Uterus (tissue), 4 donors: ENCODE measurements at regions of chr3 and their contacts with region 1.

Region 1: DNA sequence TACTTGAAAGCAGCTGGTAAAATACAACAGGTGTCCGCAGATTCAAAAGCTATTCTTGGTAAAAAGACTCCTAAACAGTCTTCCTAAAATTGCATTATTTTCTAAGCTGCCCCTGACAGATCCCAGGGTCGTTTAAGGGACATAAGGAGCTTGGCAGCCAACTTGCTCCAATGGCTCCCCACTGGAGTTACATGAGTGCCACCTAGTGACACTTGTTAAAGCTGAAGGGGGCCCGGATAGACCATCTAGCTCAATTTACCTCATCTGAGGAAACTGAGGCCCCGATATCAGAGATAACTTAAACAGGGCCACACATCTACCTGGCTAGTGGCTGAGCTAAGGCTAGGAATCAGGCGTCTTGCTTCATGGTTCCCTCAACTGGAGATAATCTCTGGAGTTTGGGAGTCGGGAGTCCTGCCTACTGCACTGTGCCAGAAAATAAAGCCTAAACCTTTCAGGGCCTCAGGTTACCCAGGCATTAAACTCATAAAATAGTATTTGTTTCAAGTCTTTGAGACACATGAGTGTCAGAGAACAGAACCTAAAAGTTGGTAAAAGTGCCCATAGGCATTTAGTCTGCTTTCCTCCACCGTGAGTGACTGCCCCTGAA is 6.5 kb upstream of the TBC1D23 start:
- DNase-seq: peak; percentile 47 to 64
- H3K4me3 ChIP-seq: no peak overlapping the region
- H3K27ac ChIP-seq: peak overlapping the region in 1 of 2 donors; percentile 26
- H3K4me1 ChIP-seq: no peaks in the 10 kb centered on the region
- H3K27me3 ChIP-seq: no peaks in the 10 kb centered on the region
- CTCF ChIP-seq: peak; percentile 79 to 89 (median 83)
- POLR2A ChIP-seq: no peak

Region 2: DNA sequence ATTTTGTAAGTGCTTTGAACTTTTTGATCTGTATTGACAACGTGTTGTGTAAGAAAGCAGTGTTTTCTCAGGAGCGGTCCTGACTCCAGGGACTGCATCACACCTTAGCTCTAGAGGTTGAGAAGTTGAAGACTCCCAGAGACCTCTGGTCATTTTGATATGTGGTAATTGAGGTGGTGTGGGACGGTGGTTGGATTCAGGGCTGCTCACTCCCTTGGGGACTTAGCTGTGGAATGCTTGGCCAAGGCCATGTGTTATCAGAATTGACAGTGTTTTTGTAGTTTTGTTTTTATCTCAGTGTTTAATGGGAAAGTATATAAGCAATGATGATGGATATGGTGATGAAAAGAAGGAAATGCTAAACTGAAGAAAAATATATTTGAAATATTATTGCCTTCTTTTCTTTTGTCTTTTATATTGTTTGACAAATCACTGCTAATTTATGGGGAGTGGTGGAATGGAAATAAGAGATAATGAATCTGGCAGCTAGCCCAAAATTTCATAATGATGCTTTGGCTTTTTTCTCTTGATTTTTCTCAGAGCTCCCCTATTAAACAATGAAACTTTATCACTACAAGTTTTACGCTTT is 420.6 kb before region 1 on chr3:
- intact Hi-C with region 1: loop called (anchors 10 kb)
- DNase-seq: no peak
- H3K4me3 ChIP-seq: no peak overlapping the region
- H3K27ac ChIP-seq: peak overlapping the region; percentile 18 to 31
- H3K4me1 ChIP-seq: no peaks in the 10 kb centered on the region
- H3K27me3 ChIP-seq: no peaks in the 10 kb centered on the region
- CTCF ChIP-seq: no peak
- POLR2A ChIP-seq: no peak

Region 3: GRCh38 chr3:100068826-100069225 is 185.4 kb before region 1 on chr3:
- intact Hi-C with region 1: loop called (anchors 10 kb)
- DNase-seq: peak; percentile 72 to 77
- H3K4me3 ChIP-seq: no peak overlapping the region
- H3K27ac ChIP-seq: peak overlapping the region in 1 of 2 donors; percentile 40
- H3K4me1 ChIP-seq: peaks cover 0 to 4% of the 10 kb centered on the region in 2 donors
- H3K27me3 ChIP-seq: no peaks in the 10 kb centered on the region
- CTCF ChIP-seq: peak; percentile 66 to 72 (median 70)
- POLR2A ChIP-seq: no peak